Activated CD4-positive, alpha-beta T cell treated with anti-CD3 and anti-CD28 coated beads for 36 hours (primary cell): ENCODE measurements at regions of chr5 and their contacts with region 1.

Region 1: DNA sequence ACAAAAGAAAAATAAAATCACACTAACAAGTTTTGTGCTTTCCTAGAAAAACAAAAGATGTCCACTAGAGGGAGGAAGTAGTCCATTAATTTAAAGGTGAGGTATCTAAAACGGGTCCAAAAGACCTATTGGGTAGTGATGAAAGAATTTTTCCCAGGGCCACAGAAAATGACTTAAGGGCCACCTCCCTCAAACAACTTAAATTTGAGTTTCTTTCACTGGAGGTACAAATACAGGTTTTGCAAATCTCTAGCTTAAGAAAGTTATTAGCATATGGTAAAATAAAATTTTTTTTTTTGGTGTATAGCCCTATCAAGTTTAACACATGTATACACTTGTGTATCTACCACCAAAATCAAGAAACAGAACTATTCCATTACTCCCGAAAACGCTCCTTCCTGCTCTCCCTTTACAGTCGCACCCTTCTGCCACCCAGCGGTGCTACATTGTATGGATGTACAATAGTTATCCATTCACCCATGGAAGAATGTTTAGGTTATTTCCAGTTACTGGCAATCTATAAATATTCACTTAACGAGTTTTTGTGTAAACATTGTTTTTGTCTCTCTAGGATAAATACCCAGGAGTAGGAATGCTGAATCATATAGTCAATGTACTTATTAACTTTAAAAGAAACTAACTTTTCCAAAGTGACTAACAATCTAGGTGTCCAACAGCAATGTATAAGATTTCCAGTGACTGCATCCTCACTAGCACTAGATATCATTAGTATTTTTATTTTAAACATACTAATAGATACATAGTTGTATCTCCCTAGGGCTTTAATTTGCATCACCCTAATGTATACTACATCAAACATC is 21.9 kb downstream of the DEPDC1B start:
- DNase-seq: no peak
- ATAC-seq: peak; percentile 42
- H3K4me3 Mint-ChIP-seq: no peak overlapping the region
- H3K27ac Mint-ChIP-seq: no peak overlapping the region
- H3K4me1 Mint-ChIP-seq: no peaks in the 10 kb centered on the region
- H3K27me3 Mint-ChIP-seq: no peaks in the 10 kb centered on the region

Region 2: GRCh38 chr5:60568646-60569045 is 109.4 kb before region 1 on chr5:
- CTCF ChIA-PET with region 1: no interaction called
- POLR2A ChIA-PET with region 1: no interaction called
- intact Hi-C with region 1: no loop called
- DNase-seq: no peak
- ATAC-seq: no peak
- H3K4me3 Mint-ChIP-seq: no peak overlapping the region
- H3K27ac Mint-ChIP-seq: no peak overlapping the region
- H3K4me1 Mint-ChIP-seq: no peaks in the 10 kb centered on the region
- H3K27me3 Mint-ChIP-seq: no peaks in the 10 kb centered on the region

Region 3: DNA sequence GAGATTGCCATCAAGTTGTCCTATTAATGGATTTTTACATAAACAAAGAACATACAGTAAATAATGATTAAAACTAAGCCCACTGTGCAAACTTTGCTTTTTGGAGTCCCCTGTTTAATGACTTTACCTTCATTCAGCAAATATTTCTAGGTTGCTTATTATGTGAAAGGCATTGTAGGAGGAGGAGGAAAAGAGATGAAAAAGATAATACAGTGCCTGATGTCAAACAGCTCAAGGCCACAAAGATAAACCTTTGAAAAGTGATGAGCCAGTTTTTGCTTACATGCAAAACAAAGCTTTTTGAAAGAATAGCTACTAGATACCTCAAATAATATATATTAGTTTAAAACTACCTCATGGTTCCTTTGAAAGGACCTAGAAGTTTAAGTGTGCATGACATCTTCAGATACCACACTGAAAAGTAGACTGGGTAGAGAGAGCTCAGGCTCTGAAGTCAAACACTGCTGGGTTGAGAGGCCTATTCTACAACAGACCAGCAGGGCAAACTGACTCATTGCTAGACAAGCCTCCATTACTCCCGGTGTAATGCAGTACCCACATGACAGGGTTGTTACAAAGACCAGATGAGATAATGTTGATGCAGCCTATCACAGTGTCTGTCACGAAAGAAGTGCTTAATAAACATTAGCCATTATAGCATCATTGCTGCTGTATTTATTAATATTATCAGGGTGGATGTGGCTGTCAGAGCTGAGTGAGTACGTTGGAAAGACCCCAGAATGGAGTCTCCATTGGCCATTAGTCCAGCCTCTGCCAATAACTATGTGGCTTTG is 10.1 kb after region 1 on chr5:
- CTCF ChIA-PET with region 1: interaction called, 14 read pairs
- POLR2A ChIA-PET with region 1: no interaction called
- intact Hi-C with region 1: no loop called
- DNase-seq: no peak
- ATAC-seq: peak; percentile 86
- H3K4me3 Mint-ChIP-seq: no peak overlapping the region
- H3K27ac Mint-ChIP-seq: no peak overlapping the region
- H3K4me1 Mint-ChIP-seq: peaks cover 2% of the 10 kb centered on the region
- H3K27me3 Mint-ChIP-seq: no peaks in the 10 kb centered on the region

Region 4: GRCh38 chr5:60843936-60844905 is 166.2 kb after region 1 on chr5 and contains the start of gene ELOVL7:
- CTCF ChIA-PET with region 1: no interaction called
- POLR2A ChIA-PET with region 1: no interaction called
- intact Hi-C with region 1: loop called in 1 of 2 experiments (anchors 1 kb)
- DNase-seq: peak; percentile 79
- ATAC-seq: peak; percentile 95
- H3K4me3 Mint-ChIP-seq: peak within 1 kb of the TSS; percentile 70
- H3K27ac Mint-ChIP-seq: no peak within 1 kb of the TSS
- H3K4me1 Mint-ChIP-seq: peaks cover 7% of the 10 kb centered on the region
- H3K27me3 Mint-ChIP-seq: peaks cover 49% of the 10 kb centered on the region
- total RNA-seq, gene ELOVL7: 0.69 to 0.85 TPM

Region 5: DNA sequence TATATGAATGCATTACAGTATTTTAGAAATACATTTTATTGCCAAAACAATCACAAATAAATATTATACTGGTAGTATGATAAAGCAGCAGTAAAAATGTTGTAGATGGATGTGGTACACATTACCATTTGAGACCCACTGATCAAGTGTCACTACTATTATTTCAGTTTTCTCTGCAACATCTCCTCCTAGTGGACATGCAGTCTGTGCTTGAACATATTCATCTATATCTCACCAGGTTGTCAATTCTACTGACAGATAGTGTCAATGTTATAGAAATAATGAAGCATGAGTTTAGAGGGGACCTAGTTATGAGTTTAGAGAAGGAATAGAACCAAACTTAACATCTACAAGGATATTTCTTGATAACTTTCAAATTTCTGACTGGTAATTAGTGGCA is 205.2 kb after region 1 on chr5:
- CTCF ChIA-PET with region 1: no interaction called
- POLR2A ChIA-PET with region 1: no interaction called
- intact Hi-C with region 1: loop called in 1 of 2 experiments (anchors 5 kb)
- DNase-seq: no peak
- ATAC-seq: no peak
- H3K4me3 Mint-ChIP-seq: no peak overlapping the region
- H3K27ac Mint-ChIP-seq: no peak overlapping the region
- H3K4me1 Mint-ChIP-seq: peaks cover under 1% of the 10 kb centered on the region
- H3K27me3 Mint-ChIP-seq: no peaks in the 10 kb centered on the region